SK-N-SH (cell line): ENCODE measurements at regions of chr14 and their contacts with region 1.

Region 1: DNA sequence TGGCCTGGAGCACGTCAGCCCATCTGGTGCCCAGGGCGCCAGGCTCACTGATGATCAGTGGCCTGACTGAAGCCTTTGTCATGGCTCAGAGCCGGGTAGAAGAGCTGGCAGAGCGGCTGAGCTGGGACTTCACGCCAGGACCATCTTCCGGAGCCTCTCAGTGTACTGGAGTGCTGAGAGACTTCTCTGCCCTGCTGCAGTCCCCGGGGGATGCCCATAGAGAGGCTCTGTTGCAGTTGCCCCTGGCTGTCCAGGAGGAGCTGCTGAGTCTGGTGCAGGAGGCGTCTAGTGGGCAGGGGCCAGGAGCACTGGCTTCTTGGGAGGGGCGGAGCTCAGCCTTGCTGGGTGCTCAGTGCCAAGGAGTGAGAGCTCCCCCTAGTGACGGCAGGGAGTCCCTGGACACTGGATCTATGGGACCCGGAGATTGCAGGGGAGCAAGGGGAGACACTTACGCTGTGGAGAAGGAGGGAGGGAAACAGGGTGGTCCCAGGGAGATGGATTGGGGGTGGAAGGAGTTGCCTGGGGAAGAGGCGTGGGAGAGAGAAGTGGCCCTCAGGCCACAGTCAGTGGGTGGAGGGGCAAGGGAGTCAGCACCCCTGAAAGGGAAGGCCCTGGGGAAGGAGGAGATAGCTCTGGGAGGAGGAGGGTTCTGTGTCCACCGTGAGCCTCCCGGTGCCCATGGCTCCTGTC is 2.0 kb downstream of the KHNYN start:
- DNase-seq: peak; percentile 93
- H3K4me3 ChIP-seq: peak overlapping the region; percentile 71 to 87
- H3K27ac ChIP-seq: peak overlapping the region in 1 of 2 experiments; percentile 40; a peak in 1 of 4 replicates
- H3K4me1 ChIP-seq: peaks cover 21 to 26% of the 10 kb centered on the region in 2 experiments; a peak in 2 of 4 replicates
- H3K27me3 ChIP-seq: no peaks in the 10 kb centered on the region
- CTCF ChIP-seq: peak; percentile 96
- EP300 ChIP-seq: no peak
- RAD21 ChIP-seq: peak; percentile 94

Region 2: DNA sequence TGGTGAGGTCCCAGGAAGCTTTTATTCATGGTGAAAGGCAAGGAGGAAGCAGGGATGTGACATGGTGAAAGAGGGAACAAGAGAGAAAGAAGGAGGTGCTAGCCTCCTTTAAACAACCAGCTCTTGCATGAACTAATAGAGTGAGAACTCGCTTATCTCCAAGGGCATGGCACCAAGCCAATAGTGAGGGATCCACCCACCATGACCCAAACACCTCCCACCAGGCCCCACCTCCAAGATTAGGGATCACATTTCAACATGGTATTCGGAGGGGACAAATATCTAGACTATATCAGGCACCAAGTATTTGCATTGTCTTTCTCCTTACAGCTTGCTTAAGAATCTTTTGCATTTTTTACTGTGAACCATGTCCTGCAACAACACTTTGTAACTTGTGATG is 570.0 kb before region 1 on chr14:
- CTCF ChIA-PET with region 1: no interaction called
- POLR2A ChIA-PET with region 1: no interaction called
- DNase-seq: no peak
- H3K4me3 ChIP-seq: no peak overlapping the region
- H3K27ac ChIP-seq: no peak overlapping the region
- H3K4me1 ChIP-seq: no peaks in the 10 kb centered on the region
- H3K27me3 ChIP-seq: no peaks in the 10 kb centered on the region
- CTCF ChIP-seq: no peak
- EP300 ChIP-seq: no peak
- RAD21 ChIP-seq: no peak

Region 3: GRCh38 chr14:24310646-24311604 is 120.8 kb before region 1 on chr14 and contains the start of gene LTB4R:
- CTCF ChIA-PET with region 1: interaction called, 33 read pairs
- POLR2A ChIA-PET with region 1: interaction called, 3 read pairs
- DNase-seq: no peak
- H3K4me3 ChIP-seq: no peak within 1 kb of the TSS
- H3K27ac ChIP-seq: no peak within 1 kb of the TSS
- H3K4me1 ChIP-seq: peaks cover 0 to 2% of the 10 kb centered on the region in 2 experiments; a peak in 1 of 4 replicates
- H3K27me3 ChIP-seq: no peaks in the 10 kb centered on the region
- CTCF ChIP-seq: no peak
- EP300 ChIP-seq: no peak
- RAD21 ChIP-seq: no peak
- polyA plus RNA-seq, gene LTB4R: 11.9 and 14.0 TPM in 2 replicates

Region 4: DNA sequence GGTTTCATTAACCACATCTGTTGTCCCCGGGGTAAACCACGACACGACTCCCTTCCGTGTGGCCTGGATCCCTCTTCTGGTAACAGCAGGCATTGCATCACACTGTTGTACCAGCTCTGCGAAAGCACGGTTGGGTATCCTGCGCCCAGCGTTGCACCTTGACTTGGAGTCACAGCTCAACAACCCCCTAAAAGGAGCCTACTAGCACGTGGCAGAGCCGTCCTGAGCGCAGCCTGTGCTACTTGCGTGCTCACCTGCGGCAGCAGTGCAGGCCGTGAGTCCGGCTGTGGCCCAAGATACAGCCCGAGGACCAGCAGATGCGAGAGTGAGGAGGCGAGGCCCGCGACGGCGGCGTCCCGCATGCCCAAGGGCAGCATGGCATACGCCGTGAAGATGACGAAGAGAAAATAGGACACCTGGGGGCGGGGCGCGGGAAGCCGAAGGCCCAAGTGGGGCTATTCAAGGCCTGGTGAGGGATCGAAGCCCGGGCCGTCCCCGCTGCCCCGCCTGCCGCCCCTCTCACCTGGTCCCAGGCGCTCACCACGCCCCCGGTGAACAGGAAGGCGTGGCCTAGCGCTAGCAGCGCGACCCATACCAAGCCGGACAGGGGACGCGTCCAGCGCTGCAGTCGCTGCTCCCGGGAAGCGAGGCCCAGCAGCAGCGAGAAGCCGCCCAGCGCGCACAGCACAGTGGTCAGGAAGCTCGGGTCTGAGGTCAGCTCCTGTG is 99.3 kb before region 1 on chr14:
- CTCF ChIA-PET with region 1: interaction called, 445 read pairs
- POLR2A ChIA-PET with region 1: interaction called, 16 read pairs
- DNase-seq: peak; percentile 94
- H3K4me3 ChIP-seq: peak overlapping the region in 1 of 2 experiments; percentile 30; a peak in 3 of 4 replicates
- H3K27ac ChIP-seq: no peak overlapping the region
- H3K4me1 ChIP-seq: peaks cover 0 to 21% of the 10 kb centered on the region in 2 experiments; a peak in 1 of 4 replicates
- H3K27me3 ChIP-seq: peaks cover 31% of the 10 kb centered on the region
- CTCF ChIP-seq: peak; percentile 68
- EP300 ChIP-seq: no peak
- RAD21 ChIP-seq: peak; percentile 59

Region 5: GRCh38 chr14:24366721-24367513 is 64.8 kb before region 1 on chr14:
- CTCF ChIA-PET with region 1: interaction called, 275 read pairs
- POLR2A ChIA-PET with region 1: interaction called, 37 read pairs
- DNase-seq: peak; percentile 85
- H3K4me3 ChIP-seq: peak overlapping the region; percentile 85 to 86
- H3K27ac ChIP-seq: peak overlapping the region; percentile 93 to 99
- H3K4me1 ChIP-seq: peaks cover 14 to 25% of the 10 kb centered on the region in 2 experiments; a peak in 3 of 4 replicates
- H3K27me3 ChIP-seq: no peaks in the 10 kb centered on the region
- CTCF ChIP-seq: no peak
- EP300 ChIP-seq: peak; percentile 53 to 62; a peak in 2 of 4 replicates
- RAD21 ChIP-seq: no peak; the same call in 1 of the 2 replicates

Region 6: DNA sequence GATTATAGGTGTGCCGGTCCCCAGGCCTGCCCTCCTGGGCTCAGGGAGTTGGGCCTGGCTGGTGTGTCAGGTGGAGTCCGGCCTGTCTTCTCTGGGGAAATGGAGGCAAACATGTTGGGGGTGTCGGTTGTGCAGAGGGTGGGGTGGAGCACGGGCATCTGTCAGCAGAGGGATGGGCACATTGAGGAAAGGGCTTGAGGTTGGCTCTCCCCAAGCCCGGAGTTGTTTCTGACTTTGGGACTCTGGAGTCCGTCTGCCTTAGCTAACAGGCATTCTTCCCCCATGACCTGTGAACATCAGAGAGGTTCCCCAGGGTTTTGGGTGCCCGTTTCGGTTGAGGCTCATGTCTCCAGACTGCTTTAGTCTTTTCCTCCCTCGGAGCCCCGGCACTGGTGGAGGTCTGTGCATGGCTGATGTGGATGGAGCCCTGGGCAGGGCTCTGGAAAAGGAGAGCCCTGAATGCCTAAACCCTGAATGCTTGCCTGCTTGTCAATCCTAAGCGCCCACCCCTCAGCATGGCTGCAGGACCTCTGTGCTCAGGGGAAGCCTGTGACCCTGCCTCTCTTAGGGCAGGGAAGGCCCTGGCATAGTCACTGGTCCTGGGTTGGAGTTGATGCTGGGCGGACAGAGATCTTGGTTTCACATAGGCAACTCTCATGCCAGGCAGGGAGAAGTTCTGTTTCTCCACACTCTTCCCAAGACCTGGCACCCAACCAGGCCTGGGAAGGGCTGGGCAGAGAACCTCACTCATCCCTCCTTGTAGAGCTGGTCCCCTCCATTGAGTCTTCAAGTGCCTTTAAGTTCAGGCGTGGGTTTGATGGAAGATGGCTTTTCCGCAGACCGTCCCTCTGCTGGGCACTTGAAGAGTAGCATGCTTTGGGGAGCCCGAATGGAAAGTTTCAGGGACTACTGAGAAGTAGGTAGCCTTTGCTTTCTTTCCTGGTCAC is 20.0 kb before region 1 on chr14:
- CTCF ChIA-PET with region 1: interaction called, 63 read pairs
- POLR2A ChIA-PET with region 1: interaction called, 3 read pairs
- DNase-seq: peak; percentile 77
- H3K4me3 ChIP-seq: no peak overlapping the region
- H3K27ac ChIP-seq: no peak overlapping the region
- H3K4me1 ChIP-seq: no peaks in the 10 kb centered on the region; a peak in 1 of 4 replicates
- H3K27me3 ChIP-seq: no peaks in the 10 kb centered on the region
- CTCF ChIP-seq: peak; percentile 73
- EP300 ChIP-seq: no peak
- RAD21 ChIP-seq: peak; percentile 72